PC-9 (cell line): ENCODE measurements at regions of chr14 and their contacts with region 1.

Region 1: DNA sequence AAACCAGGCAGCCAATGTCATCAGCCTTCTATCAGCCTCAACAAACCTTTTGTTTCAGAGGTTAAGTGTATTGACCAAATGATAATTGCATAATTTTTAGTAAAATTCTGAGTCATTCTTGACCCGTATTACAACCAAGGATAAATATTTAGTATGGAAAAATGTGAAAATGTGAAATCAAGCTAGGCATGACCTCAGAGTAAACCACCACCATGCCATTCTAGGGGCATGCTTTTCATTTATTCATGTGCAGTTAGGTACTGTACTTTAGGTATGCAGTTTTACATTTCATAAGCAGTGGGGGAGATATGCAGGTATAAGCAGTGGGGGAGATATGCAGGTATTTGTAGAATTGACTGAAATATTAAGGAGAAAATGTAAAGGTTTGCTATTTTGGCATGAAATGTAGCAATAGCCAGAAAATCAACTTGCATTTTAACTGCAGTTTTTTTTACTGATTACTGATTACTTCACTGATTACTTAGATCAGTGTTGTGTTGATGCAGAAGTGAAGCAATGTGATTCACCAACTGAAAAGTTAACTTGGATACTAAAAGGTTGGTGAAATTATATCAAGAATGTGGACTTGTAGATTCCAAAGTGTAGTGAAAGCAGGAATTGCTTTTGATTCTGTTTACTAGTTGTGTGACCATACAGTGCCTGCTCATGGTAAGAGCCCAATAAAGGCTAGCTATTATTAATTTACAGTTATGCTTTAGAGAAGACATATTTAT is 184.2 kb downstream of the ESR2 start:
- DNase-seq: peak in 1 of 2 experiments; percentile 78
- H3K4me3 ChIP-seq: no peak overlapping the region
- H3K27ac ChIP-seq: peak overlapping the region; percentile 54
- H3K4me1 ChIP-seq: peaks cover 20% of the 10 kb centered on the region
- H3K27me3 ChIP-seq: no peaks in the 10 kb centered on the region
- CTCF ChIP-seq: no peak

Region 2: DNA sequence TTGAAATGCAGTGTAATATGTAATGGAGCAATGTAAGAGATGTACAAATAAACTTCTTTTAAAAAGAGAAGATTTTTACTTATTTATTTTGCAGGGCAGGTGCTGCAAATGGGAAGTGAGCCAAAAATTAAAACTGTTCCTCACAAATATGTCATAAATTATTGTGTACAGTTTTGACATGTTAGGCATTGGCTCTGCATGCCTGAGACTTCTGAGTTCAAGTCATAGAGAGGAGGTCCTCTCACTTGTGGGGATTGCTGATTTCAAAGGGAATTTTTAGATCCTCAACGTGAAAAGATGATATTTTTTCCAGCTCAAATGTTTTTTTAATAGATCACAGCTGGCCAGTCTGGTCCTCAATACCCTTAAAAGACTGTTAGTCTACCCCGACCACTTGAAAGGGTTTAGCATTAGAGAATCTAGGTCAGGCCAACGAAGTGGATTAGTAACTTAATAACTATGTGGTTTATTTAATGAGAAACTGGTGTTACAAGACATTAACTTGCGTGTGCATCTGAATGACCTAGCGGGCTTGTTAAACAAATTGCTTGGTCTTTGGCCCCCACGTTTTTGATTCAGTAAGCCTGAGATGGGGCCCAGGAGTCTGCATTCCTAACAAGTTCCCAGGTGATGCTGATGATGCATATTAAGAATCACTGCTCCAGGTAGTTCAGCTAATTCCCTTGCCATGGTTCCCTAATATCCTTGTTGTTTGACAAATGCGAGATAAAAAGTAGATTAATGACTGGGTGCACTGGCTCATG is 437.4 kb before region 1 on chr14:
- CTCF ChIA-PET with region 1: no interaction called
- POLR2A ChIA-PET with region 1: no interaction called
- intact Hi-C with region 1: no loop called
- DNase-seq: peak in 1 of 2 experiments; percentile 39
- H3K4me3 ChIP-seq: no peak overlapping the region
- H3K27ac ChIP-seq: no peak overlapping the region
- H3K4me1 ChIP-seq: peaks cover 10% of the 10 kb centered on the region
- H3K27me3 ChIP-seq: no peaks in the 10 kb centered on the region
- CTCF ChIP-seq: no peak

Region 3: DNA sequence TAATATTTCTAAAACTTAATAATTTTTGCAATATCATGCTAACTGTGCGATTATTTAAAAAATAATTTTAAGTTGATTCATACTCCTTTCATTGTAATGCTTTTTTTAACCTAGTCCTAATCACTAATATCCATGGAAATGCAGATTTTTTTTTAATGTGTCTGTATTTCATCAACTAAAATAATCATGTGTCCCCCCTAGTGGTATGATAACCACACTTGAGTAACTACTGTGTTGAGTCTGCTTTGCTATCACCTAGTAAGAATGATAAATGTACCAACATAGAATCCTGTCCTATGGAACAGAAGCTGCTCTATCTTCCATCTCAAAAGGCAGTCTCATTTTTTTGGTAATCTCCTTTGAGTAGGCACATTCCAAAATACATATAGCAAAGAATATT is 276.3 kb before region 1 on chr14:
- CTCF ChIA-PET with region 1: no interaction called
- POLR2A ChIA-PET with region 1: interaction called, 21 read pairs
- intact Hi-C with region 1: no loop called
- DNase-seq: no peak
- H3K4me3 ChIP-seq: no peak overlapping the region
- H3K27ac ChIP-seq: no peak overlapping the region
- H3K4me1 ChIP-seq: no peaks in the 10 kb centered on the region
- H3K27me3 ChIP-seq: no peaks in the 10 kb centered on the region
- CTCF ChIP-seq: no peak